ENCODE measurements at regions of chrX and their contacts with region 1.

Region 1: GRCh38 chrX:74291964-74292807 is 11.8 kb upstream of the ZCCHC13 start:
- DNase-seq: peak; percentile 61 to 93 (median 80)
- ATAC-seq: peak; percentile 82
- H3K4me3 ChIP-seq: peak overlapping the region; percentile 83 to 86
- H3K4me3 Mint-ChIP-seq: peak overlapping the region; percentile 92
- H3K27ac ChIP-seq: peak overlapping the region; percentile 84 to 89
- H3K27ac Mint-ChIP-seq: peak overlapping the region; percentile 95
- H3K4me1 ChIP-seq: peaks cover 7% of the 10 kb centered on the region
- H3K4me1 Mint-ChIP-seq: peaks cover 21% of the 10 kb centered on the region
- H3K27me3 ChIP-seq: no peaks in the 10 kb centered on the region
- H3K27me3 Mint-ChIP-seq: no peaks in the 10 kb centered on the region
- CTCF ChIP-seq: no peak

Region 2: GRCh38 chrX:73562984-73563737 is 729.0 kb before region 1 on chrX and contains the start of gene CHIC1:
- CTCF ChIA-PET with region 1: no interaction called
- POLR2A ChIA-PET with region 1: no interaction called
- intact Hi-C with region 1: loop called in 1 of 2 experiments (anchors 10 kb)
- DNase-seq: peak; percentile 46 to 88 (median 67)
- ATAC-seq: peak; percentile 69
- H3K4me3 ChIP-seq: peak within 1 kb of the TSS; percentile 71 to 74
- H3K4me3 Mint-ChIP-seq: peak within 1 kb of the TSS; percentile 97
- H3K27ac ChIP-seq: peak within 1 kb of the TSS; percentile 78 to 93
- H3K27ac Mint-ChIP-seq: peak within 1 kb of the TSS; percentile 99
- H3K4me1 ChIP-seq: peaks cover 9% of the 10 kb centered on the region
- H3K4me1 Mint-ChIP-seq: peaks cover 32% of the 10 kb centered on the region
- H3K27me3 ChIP-seq: no peaks in the 10 kb centered on the region
- H3K27me3 Mint-ChIP-seq: no peaks in the 10 kb centered on the region
- CTCF ChIP-seq: no peak
- total RNA-seq, gene CHIC1: 5.0 to 5.4 TPM

Region 3: DNA sequence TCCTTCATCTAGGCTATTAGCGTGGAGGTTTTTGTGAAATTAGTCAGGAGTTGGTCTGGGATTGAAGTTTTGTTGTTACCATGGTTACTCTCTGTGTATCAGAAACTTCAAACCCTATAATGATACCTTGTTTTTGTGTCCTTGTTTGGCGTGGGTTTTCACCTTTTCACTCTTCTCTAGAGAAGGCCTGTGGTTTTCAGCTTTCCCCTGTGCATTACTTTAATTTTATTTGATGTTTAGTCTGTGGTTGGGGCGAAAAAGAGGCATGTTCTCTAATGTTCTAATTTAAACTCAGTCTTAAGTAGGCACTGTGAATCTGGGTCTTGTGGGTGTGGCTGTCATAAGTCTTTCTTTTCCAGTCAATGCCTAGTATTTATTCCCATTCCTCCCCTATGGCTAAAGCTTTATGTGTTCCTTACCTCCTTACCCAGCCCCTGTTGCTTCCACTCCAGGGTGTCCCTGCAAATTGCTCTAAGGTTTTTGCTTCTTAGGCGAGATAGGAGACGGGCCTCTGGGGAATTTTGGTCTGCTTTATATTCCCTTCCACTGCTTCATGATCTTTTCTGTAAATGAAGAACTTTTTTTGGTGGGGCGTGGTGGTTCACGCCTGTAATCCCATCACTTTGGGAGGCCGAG is 314.5 kb before region 1 on chrX:
- CTCF ChIA-PET with region 1: no interaction called
- POLR2A ChIA-PET with region 1: no interaction called
- intact Hi-C with region 1: loop called in 1 of 2 experiments (anchors 10 kb)
- DNase-seq: peak in 4 of 9 experiments; percentile 21 to 81 (median 52)
- ATAC-seq: peak; percentile 84
- H3K4me3 ChIP-seq: no peak overlapping the region
- H3K4me3 Mint-ChIP-seq: peak overlapping the region; percentile 44
- H3K27ac ChIP-seq: peak overlapping the region; percentile 60 to 66
- H3K27ac Mint-ChIP-seq: peak overlapping the region; percentile 91
- H3K4me1 ChIP-seq: peaks cover 25% of the 10 kb centered on the region
- H3K4me1 Mint-ChIP-seq: peaks cover 60% of the 10 kb centered on the region
- H3K27me3 ChIP-seq: no peaks in the 10 kb centered on the region
- H3K27me3 Mint-ChIP-seq: no peaks in the 10 kb centered on the region
- CTCF ChIP-seq: no peak

Region 4: GRCh38 chrX:74421036-74421739 is 129.0 kb after region 1 on chrX and contains the start of gene SLC16A2:
- CTCF ChIA-PET with region 1: no interaction called
- POLR2A ChIA-PET with region 1: no interaction called
- intact Hi-C with region 1: loop called in 1 of 2 experiments (anchors 5 kb)
- DNase-seq: peak in 8 of 9 experiments; percentile 0 to 58 (median 30)
- ATAC-seq: peak; percentile 55
- H3K4me3 ChIP-seq: peak within 1 kb of the TSS; percentile 45 to 49
- H3K4me3 Mint-ChIP-seq: peak within 1 kb of the TSS; percentile 87
- H3K27ac ChIP-seq: no peak within 1 kb of the TSS
- H3K27ac Mint-ChIP-seq: no peak within 1 kb of the TSS
- H3K4me1 ChIP-seq: peaks cover 10% of the 10 kb centered on the region
- H3K4me1 Mint-ChIP-seq: peaks cover 13% of the 10 kb centered on the region
- H3K27me3 ChIP-seq: peaks cover 0 to 6% of the 10 kb centered on the region in 2 experiments
- H3K27me3 Mint-ChIP-seq: peaks cover 17% of the 10 kb centered on the region
- CTCF ChIP-seq: no peak
- total RNA-seq, gene SLC16A2: 0.16 to 0.17 TPM

Region 5: GRCh38 chrX:74614093-74614909 is 322.1 kb after region 1 on chrX and contains the start of gene RLIM:
- CTCF ChIA-PET with region 1: no interaction called
- POLR2A ChIA-PET with region 1: interaction called, 6 read pairs
- intact Hi-C with region 1: loop called (anchors 1 to 5 kb)
- DNase-seq: peak; percentile 81 to 97 (median 90)
- ATAC-seq: peak; percentile 83
- H3K4me3 ChIP-seq: peak within 1 kb of the TSS; percentile 67 to 75
- H3K4me3 Mint-ChIP-seq: peak within 1 kb of the TSS; percentile 99
- H3K27ac ChIP-seq: peak within 1 kb of the TSS; percentile 99 to 100
- H3K27ac Mint-ChIP-seq: peak within 1 kb of the TSS; percentile 100
- H3K4me1 ChIP-seq: peaks cover 16% of the 10 kb centered on the region
- H3K4me1 Mint-ChIP-seq: peaks cover 24% of the 10 kb centered on the region
- H3K27me3 ChIP-seq: no peaks in the 10 kb centered on the region
- H3K27me3 Mint-ChIP-seq: no peaks in the 10 kb centered on the region
- CTCF ChIP-seq: no peak
- total RNA-seq, gene RLIM: 71.0 to 76.2 TPM

Region 6: GRCh38 chrX:75273483-75273882 is 981.3 kb after region 1 on chrX:
- CTCF ChIA-PET with region 1: no interaction called
- POLR2A ChIA-PET with region 1: no interaction called
- intact Hi-C with region 1: loop called in 1 of 2 experiments (anchors 5 kb)
- DNase-seq: peak in 1 of 9 experiments; percentile 5
- ATAC-seq: peak; percentile 43
- H3K4me3 ChIP-seq: peak overlapping the region; percentile 75 to 88
- H3K4me3 Mint-ChIP-seq: peak overlapping the region; percentile 92
- H3K27ac ChIP-seq: peak overlapping the region; percentile 89 to 90
- H3K27ac Mint-ChIP-seq: peak overlapping the region; percentile 96
- H3K4me1 ChIP-seq: peaks cover 18% of the 10 kb centered on the region
- H3K4me1 Mint-ChIP-seq: peaks cover 44% of the 10 kb centered on the region
- H3K27me3 ChIP-seq: no peaks in the 10 kb centered on the region
- H3K27me3 Mint-ChIP-seq: no peaks in the 10 kb centered on the region
- CTCF ChIP-seq: no peak